Thyroid gland (tissue), 4 donors: ENCODE measurements at regions of chr1 and their contacts with region 1.

Region 1: DNA sequence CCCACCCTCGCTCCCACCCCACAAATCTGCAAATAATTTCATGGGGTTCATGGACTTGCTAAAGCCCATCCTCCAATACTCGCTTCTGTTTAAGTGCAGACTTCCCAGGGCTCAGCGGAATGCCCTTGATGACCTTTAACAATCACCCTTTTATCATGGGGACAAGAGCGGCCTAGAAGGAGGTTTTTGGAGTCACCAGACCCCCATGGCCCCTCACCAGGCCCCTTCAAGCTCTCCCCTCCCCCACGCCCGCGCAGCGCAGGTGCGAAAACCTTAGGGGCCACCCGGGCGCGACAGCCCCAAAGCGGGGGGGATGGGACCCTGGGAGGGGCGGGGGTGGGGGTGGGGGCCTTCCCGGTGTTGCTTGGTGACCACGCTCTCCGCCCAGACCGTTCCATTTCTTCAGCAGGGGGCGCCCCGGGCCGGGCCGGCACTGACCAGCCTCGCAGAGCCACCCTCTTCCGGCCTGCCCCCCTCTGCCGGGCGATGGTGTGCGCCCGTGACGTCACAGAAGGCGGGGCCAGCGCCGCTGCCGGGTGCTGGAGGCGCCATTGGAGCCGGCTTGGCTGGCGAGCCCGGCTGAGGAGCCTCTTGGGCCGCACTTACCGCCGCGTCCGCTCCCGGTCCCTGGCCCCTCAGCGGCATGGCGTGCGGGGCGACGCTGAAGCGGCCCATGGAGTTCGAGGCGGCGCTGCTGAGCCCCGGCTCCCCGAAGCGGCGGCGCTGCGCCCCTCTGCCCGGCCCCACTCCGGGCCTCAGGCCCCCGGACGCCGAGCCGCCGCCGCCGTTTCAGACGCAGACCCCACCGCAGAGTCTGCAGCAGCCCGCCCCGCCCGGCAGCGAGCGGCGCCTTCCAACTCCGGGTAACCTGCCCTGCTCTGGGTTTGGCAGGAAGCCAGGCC is at the start of gene AKIRIN1:
- DNase-seq: peak; percentile 98
- H3K4me3 ChIP-seq: peak within 1 kb of the TSS; percentile 92 to 99 (median 92)
- H3K27ac ChIP-seq: peak within 1 kb of the TSS; percentile 88 to 90 (median 90)
- H3K4me1 ChIP-seq: peaks cover 21 to 31% of the 10 kb centered on the region in 2 donors
- H3K27me3 ChIP-seq: no peaks in the 10 kb centered on the region
- CTCF ChIP-seq: peak in 2 of 6 experiments; percentile 12 to 34
- POLR2A ChIP-seq: peak; percentile 87 to 95
- total RNA-seq, gene AKIRIN1: 46.8 to 64.6 (median 56.7) TPM

Region 2: DNA sequence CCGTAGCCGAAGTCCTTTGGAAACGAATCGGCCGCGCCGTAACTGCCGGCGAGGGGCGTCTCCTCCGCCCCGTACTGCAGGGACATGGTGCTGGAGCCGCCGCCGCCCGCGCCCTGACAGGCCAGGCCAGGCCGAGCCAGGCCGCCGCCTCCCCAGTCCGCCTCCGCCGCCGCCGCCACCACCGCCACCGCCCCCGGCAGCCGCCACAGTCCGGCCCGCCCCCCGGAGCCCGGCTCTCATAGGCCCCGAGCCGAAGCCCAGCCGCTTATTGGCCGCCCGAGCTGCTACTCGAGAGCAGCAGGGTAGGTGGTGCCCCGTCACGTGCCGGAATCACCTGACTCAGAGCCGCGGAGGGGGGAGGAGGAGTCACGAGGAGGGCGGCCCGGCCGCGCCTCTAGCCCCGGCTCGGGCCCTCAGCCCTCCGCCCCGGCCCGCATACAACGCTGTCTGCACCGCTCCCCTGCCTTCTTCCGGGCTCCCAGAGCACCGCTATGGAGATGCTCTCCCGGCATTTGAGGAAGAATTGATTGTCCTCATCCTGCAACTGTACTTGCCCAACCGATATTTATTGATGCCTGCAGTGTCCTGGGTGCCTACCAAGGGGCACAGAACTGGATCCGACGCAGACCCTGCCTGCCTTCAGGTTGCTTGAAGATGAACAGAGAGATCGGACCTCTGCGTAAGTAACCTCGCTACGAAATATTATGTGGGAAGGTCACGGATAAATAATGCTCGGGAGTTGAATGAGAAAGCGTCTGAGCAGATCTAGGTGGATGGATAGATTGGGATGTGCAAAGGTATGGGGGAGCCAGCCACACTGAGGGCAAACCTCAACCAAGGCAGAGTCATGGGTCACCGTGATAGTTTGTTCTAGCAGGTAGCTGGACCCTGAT is 131.2 kb before region 1 on chr1 and contains the start of gene RRAGC:
- intact Hi-C with region 1: loop called (anchors 5 kb)
- DNase-seq: peak; percentile 100
- H3K4me3 ChIP-seq: peak within 1 kb of the TSS; percentile 81 to 87 (median 87)
- H3K27ac ChIP-seq: peak within 1 kb of the TSS; percentile 21 to 86 (median 83)
- H3K4me1 ChIP-seq: peaks cover 12 to 20% of the 10 kb centered on the region in 2 donors
- H3K27me3 ChIP-seq: no peaks in the 10 kb centered on the region
- CTCF ChIP-seq: peak in 1 of 6 experiments; percentile 8
- POLR2A ChIP-seq: peak in 1 of 2 donors; percentile 73
- total RNA-seq, gene RRAGC: 13.2 to 20.3 (median 15.7) TPM

Region 3: DNA sequence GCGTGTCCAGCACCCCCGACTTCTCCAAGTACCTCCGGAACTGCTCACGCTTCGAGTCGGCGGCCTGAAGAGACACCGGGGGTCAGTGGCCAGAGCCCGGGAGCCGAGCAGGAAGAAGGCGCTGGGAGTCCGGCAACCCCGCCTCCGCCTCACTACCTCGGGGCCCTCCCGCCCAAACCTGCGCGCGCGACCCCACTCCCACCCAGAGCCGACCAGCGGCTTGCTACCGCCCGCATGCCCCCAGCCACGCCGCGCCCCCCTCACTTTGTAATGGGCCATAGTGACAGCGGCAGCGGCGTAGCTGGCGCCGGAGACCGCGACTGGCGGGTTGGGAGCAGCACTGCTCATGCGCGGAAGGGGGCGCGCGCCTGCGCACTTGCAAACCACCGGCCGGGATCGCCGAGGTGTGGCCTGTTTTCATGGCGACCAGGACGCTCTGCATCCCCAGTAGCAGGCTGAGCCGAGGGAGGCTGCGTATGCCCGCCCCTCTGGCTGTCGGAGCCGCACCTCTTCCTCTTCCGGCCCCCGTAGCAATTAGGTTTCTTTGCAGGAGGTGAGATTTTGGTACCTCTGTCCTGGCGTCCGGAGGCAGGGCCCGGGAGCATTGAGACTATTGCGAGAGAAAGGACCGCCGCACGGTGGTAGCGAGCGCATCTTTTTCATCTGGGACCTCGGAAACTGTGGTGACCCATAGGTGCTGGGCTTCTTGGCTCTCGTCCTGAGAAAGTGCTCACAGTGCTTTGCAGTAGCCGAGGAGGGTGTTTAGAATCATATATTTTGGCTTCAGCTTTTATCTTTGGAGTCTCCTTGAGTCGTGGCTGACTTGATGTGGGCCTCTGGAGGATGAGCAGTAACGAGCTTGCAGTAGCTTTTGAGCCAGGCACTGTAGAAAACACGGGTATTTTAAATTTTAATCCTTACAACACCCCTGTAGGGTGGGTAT is 117.7 kb before region 1 on chr1 and contains the start of gene MYCBP:
- intact Hi-C with region 1: loop called (anchors 5 kb)
- DNase-seq: peak; percentile 96 to 97
- H3K4me3 ChIP-seq: peak within 1 kb of the TSS; percentile 5 to 71 (median 43)
- H3K27ac ChIP-seq: peak within 1 kb of the TSS; percentile 23 to 44 (median 41)
- H3K4me1 ChIP-seq: peaks cover 12 to 18% of the 10 kb centered on the region in 2 donors
- H3K27me3 ChIP-seq: no peaks in the 10 kb centered on the region
- CTCF ChIP-seq: peak in 2 of 6 experiments; percentile 21 to 36
- POLR2A ChIP-seq: peak in 1 of 2 donors; percentile 74
- total RNA-seq, gene MYCBP: 21.6 to 31.4 (median 24.0) TPM

Region 4: DNA sequence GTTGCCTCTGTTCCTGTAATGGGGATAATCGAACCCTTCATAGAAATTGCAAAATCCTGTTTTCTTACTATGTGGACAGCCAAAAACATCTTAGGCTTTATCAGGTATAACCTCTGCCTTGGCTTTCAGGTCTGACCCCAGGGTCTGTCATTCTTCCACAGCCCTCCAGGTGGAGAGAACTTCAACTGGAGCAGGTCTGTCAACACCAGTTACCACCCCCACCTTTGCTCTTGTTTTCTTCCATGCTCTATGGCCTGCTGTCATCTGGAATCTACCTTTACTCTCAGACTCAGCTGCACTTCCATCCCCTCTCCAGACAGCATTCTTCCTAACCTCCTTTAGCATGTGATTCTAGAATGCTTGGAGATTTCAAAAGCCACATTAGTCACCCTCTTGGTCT is 99.2 kb before region 1 on chr1:
- intact Hi-C with region 1: no loop called
- DNase-seq: no peak
- H3K4me3 ChIP-seq: no peak overlapping the region
- H3K27ac ChIP-seq: no peak overlapping the region
- H3K4me1 ChIP-seq: no peaks in the 10 kb centered on the region
- H3K27me3 ChIP-seq: no peaks in the 10 kb centered on the region
- CTCF ChIP-seq: no peak
- POLR2A ChIP-seq: no peak

Region 5: GRCh38 chr1:38941527-38942019 is 49.4 kb before region 1 on chr1 and contains the start of gene RHBDL2:
- intact Hi-C with region 1: no loop called
- DNase-seq: peak; percentile 88 to 93
- H3K4me3 ChIP-seq: peak within 1 kb of the TSS in 2 of 3 donors; percentile 23 to 39
- H3K27ac ChIP-seq: no peak within 1 kb of the TSS
- H3K4me1 ChIP-seq: peaks cover 0 to 4% of the 10 kb centered on the region in 2 donors
- H3K27me3 ChIP-seq: no peaks in the 10 kb centered on the region
- CTCF ChIP-seq: no peak
- POLR2A ChIP-seq: no peak
- total RNA-seq, gene RHBDL2: not detected

Region 6: DNA sequence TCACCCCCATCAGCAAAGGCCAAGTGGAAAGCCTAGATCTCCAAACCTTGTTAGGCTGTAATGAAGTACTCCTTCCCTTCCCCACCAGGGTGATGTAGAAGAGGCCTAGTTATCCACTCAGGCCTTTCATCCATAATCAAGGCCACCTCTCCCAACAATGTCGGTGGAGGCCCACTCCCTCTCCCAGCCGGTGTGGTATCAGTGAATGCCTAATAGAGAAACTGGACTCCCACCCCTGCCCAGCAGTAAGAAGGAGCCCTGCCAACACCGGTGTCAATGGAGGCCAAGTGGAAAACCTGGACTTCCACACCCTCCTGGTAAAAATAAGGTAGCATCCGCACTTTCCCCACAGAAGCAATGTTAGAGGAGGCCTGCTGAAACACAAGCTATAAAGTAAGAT is 59.0 kb after region 1 on chr1:
- intact Hi-C with region 1: no loop called
- DNase-seq: no peak
- H3K4me3 ChIP-seq: no peak overlapping the region
- H3K27ac ChIP-seq: peak overlapping the region in 1 of 3 donors; percentile 5
- H3K4me1 ChIP-seq: peaks cover 0 to 11% of the 10 kb centered on the region in 2 donors
- H3K27me3 ChIP-seq: no peaks in the 10 kb centered on the region
- CTCF ChIP-seq: no peak
- POLR2A ChIP-seq: no peak